BJ (cell line): ENCODE measurements at regions of chr7 and their contacts with region 1.

Region 1: DNA sequence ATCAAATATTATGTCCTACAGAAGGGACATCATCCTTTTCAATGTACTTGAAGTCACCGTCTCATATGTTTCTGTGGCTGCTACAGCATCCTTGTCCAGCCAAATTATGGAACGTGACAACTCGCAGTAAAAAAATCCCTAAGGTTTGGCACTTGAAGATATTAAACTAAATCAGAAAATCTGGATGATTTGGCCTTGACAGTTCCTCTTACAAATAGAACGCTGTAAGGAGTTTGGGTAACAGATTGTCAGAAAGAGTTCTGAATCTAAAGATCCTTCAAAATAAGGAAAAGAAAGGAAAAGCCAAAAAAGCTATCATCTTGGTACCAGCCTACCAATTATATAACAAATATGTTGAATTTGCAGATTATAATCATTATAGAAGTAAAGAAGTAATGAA is 21.0 kb downstream of the XRCC2 start:
- DNase-seq: no peak
- H3K4me3 ChIP-seq: no peak overlapping the region
- H3K27me3 ChIP-seq: no peaks in the 10 kb centered on the region
- CTCF ChIP-seq: no peak

Region 2: DNA sequence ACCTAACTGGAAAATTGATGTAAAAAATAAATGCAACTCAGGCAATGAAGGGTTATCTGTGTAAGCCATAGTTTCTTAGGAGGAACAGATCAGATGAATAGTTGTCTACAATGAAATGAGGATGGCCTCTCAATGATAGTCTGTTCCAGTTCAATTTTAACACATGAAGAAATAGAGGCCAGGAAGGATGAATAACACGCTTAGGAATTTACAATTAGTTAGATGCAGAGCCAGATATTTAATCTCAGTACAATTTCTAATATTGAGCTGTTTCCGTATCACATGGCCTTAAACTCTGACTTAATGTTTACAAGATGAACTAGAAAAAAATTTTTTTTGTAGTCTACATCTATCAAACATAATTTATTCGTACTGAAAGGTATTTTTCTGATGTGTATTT is 452.9 kb before region 1 on chr7:
- CTCF ChIA-PET with region 1: no interaction called
- POLR2A ChIA-PET with region 1: interaction called, 10 read pairs
- DNase-seq: peak; percentile 56
- H3K4me3 ChIP-seq: no peak overlapping the region
- H3K27me3 ChIP-seq: no peaks in the 10 kb centered on the region
- CTCF ChIP-seq: no peak

Region 3: GRCh38 chr7:152568972-152569371 is 86.0 kb before region 1 on chr7:
- CTCF ChIA-PET with region 1: no interaction called
- POLR2A ChIA-PET with region 1: no interaction called
- DNase-seq: no peak
- H3K4me3 ChIP-seq: no peak overlapping the region
- H3K27me3 ChIP-seq: no peaks in the 10 kb centered on the region
- CTCF ChIP-seq: no peak

Region 4: GRCh38 chr7:152743201-152743952 is 88.4 kb after region 1 on chr7:
- CTCF ChIA-PET with region 1: no interaction called
- POLR2A ChIA-PET with region 1: no interaction called
- DNase-seq: no peak
- H3K4me3 ChIP-seq: no peak overlapping the region
- H3K27me3 ChIP-seq: no peaks in the 10 kb centered on the region
- CTCF ChIP-seq: no peak

Region 5: DNA sequence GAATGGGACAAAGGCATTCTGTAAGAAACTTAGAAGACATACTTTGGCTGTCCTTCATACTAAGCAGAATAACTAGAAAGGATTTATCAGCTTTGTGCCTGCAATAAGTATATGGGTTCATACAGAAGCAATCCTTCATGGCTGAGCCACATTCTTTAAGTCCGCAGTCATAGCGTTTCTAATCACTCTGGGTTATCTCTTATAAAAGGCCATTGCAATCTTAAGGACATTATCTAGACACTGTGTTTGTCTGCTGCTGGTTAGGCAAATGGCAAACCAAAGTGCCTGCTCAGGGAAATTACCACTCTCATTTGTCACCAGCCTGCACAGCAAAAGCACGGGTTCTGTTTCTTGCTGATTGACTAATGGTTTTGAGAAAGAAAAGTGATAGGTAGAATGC is 593.0 kb after region 1 on chr7:
- CTCF ChIA-PET with region 1: no interaction called
- POLR2A ChIA-PET with region 1: no interaction called
- DNase-seq: no peak
- H3K4me3 ChIP-seq: no peak overlapping the region
- H3K27me3 ChIP-seq: no peaks in the 10 kb centered on the region
- CTCF ChIP-seq: no peak